ENCODE measurements at regions of chr6 and their contacts with region 1.

Region 1: DNA sequence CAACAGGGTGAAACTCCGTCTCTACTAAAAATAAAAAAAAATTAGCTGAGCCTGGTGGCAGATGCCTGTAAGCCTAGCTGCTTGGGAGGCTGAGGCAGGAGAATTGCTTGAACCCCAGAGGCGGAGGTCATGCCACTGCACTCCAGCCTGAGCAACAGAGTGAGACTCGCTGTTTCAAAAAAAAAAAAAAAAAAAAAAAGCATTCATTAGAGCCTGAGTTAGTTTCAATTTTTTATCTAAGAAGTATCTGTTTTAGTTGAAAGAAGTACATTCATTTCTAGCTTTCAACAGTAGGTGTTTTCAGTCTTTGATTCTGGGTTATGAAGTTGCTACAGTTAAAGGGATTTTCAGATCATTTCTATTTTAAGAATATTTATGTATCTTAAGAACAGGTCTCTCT is 42.2 kb downstream of the ZNF292 start:
- DNase-seq: peak; percentile 49
- H3K4me3 Mint-ChIP-seq: no peak overlapping the region
- H3K27ac Mint-ChIP-seq: peak overlapping the region; percentile 38
- H3K4me1 Mint-ChIP-seq: peaks cover 67% of the 10 kb centered on the region
- H3K27me3 Mint-ChIP-seq: no peaks in the 10 kb centered on the region

Region 2: GRCh38 chr6:87182321-87182720 is 15.2 kb before region 1 on chr6:
- CTCF ChIA-PET with region 1: interaction called, 4 read pairs
- POLR2A ChIA-PET with region 1: interaction called, 3 read pairs
- intact Hi-C with region 1: loop called (anchors 1 kb)
- DNase-seq: peak; percentile 46
- H3K4me3 Mint-ChIP-seq: peak overlapping the region; percentile 37
- H3K27ac Mint-ChIP-seq: peak overlapping the region; percentile 84
- H3K4me1 Mint-ChIP-seq: peaks cover 79% of the 10 kb centered on the region
- H3K27me3 Mint-ChIP-seq: no peaks in the 10 kb centered on the region

Measured in activated CD4-positive, alpha-beta memory T cell treated with anti-CD3 and anti-CD28 coated beads for 36 hours (primary cell).